Activated CD4-positive, alpha-beta memory T cell treated with anti-CD3 and anti-CD28 coated beads for 36 hours (primary cell): ENCODE measurements at regions of chr19 and their contacts with region 1.

Region 1: DNA sequence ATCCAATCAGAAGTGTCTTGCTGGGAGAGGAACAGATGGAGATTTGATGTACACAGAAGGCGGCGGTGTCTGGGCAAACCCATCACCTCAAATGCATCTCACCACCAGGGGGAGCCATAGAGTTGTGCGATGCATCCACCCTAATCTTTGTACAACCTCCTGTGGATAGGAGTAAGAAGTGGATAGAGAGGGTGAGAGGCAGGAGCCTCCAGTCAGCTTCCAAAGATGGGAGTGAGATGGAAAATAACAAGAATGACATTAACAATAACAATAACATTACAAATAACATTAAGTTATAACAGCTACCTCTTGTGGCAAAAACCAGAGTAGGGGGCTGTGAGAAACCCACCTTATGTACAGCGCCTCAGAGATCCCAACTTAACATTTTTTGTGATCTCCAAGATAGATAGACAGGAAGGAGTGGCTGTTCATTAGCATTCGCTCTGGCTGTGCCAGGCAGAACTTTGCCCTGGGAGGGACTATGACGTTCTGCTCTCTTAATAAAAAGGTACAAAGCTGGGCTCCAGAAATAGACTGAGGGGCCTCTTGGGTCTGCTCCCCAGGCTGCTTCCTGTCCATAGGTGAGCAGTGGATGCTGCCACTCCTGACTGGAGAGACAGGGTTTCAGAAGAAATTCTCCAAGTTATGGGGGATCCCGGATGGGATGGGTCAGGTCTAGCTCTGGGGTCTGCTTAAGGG is 5.2 kb upstream of the CEACAM18 start:
- DNase-seq: peak; percentile 89
- H3K4me3 Mint-ChIP-seq: no peak overlapping the region
- H3K27ac Mint-ChIP-seq: no peak overlapping the region
- H3K4me1 Mint-ChIP-seq: peaks cover 16% of the 10 kb centered on the region
- H3K27me3 Mint-ChIP-seq: peaks cover 7% of the 10 kb centered on the region

Region 2: GRCh38 chr19:51272183-51272810 is 200.9 kb before region 1 on chr19:
- CTCF ChIA-PET with region 1: no interaction called
- POLR2A ChIA-PET with region 1: no interaction called
- intact Hi-C with region 1: no loop called
- DNase-seq: peak; percentile 57
- H3K4me3 Mint-ChIP-seq: no peak overlapping the region
- H3K27ac Mint-ChIP-seq: peak overlapping the region; percentile 71
- H3K4me1 Mint-ChIP-seq: peaks cover 22% of the 10 kb centered on the region
- H3K27me3 Mint-ChIP-seq: no peaks in the 10 kb centered on the region

Region 3: GRCh38 chr19:51422053-51422448 is 51.1 kb before region 1 on chr19:
- CTCF ChIA-PET with region 1: interaction called, 23 read pairs
- POLR2A ChIA-PET with region 1: no interaction called
- intact Hi-C with region 1: no loop called
- DNase-seq: peak; percentile 91
- H3K4me3 Mint-ChIP-seq: no peak overlapping the region
- H3K27ac Mint-ChIP-seq: no peak overlapping the region
- H3K4me1 Mint-ChIP-seq: peaks cover 18% of the 10 kb centered on the region
- H3K27me3 Mint-ChIP-seq: peaks cover 18% of the 10 kb centered on the region

Region 4: DNA sequence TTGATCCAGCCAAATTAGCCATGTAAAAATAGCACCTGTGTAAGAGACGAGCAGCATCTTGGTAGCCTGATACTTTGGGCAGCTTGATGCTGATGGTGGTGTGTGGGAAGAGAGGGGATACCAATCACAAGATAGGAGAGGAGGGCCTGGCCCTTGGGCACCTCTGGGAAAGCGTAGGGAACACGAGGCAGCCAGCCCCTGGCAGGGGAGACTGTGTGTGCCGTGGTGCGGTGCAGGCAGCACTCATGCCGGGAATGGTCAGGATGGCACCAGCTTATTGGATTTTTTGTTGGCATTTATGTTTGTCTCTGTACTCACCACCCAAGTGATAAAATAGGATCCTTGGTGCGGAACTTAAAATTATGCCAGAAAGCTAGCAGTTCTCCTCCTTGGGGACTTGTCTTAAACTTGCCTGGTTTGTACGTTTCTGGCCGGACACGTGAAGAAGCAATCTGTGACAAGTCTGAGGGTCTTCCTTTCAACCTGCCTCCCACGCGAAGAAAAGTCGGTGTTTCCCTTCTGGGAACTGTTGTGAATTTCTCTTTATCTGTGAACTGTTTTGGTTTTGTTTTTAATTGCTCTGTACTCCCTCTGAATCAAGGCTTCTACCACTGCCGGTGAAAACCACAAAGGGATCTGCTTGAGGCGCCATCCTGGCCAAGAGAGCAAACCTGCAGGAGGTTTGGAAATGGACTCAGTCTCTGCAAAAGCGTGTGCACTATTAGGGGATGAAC is 25.0 kb before region 1 on chr19:
- CTCF ChIA-PET with region 1: interaction called, 15 read pairs
- POLR2A ChIA-PET with region 1: no interaction called
- intact Hi-C with region 1: loop called (anchors 2 kb)
- DNase-seq: peak; percentile 80
- H3K4me3 Mint-ChIP-seq: peak overlapping the region; percentile 51
- H3K27ac Mint-ChIP-seq: peak overlapping the region; percentile 93
- H3K4me1 Mint-ChIP-seq: peaks cover 51% of the 10 kb centered on the region
- H3K27me3 Mint-ChIP-seq: no peaks in the 10 kb centered on the region

Region 5: GRCh38 chr19:51507640-51508058 is 34.5 kb after region 1 on chr19:
- CTCF ChIA-PET with region 1: interaction called, 150 read pairs
- POLR2A ChIA-PET with region 1: no interaction called
- intact Hi-C with region 1: no loop called
- DNase-seq: no peak
- H3K4me3 Mint-ChIP-seq: no peak overlapping the region
- H3K27ac Mint-ChIP-seq: no peak overlapping the region
- H3K4me1 Mint-ChIP-seq: peaks cover 8% of the 10 kb centered on the region
- H3K27me3 Mint-ChIP-seq: peaks cover 11% of the 10 kb centered on the region

Region 6: GRCh38 chr19:51531349-51532315 is 58.5 kb after region 1 on chr19 and contains the start of gene SIGLEC6:
- CTCF ChIA-PET with region 1: interaction called, 10 read pairs
- POLR2A ChIA-PET with region 1: no interaction called
- intact Hi-C with region 1: no loop called
- DNase-seq: peak; percentile 13
- H3K4me3 Mint-ChIP-seq: no peak within 1 kb of the TSS
- H3K27ac Mint-ChIP-seq: no peak within 1 kb of the TSS
- H3K4me1 Mint-ChIP-seq: no peaks in the 10 kb centered on the region
- H3K27me3 Mint-ChIP-seq: peaks cover 58% of the 10 kb centered on the region
- total RNA-seq, gene SIGLEC6: not detected

Region 7: GRCh38 chr19:51637362-51637978 is 164.3 kb after region 1 on chr19:
- CTCF ChIA-PET with region 1: interaction called, 17 read pairs
- POLR2A ChIA-PET with region 1: no interaction called
- intact Hi-C with region 1: loop called (anchors 1 kb)
- DNase-seq: no peak
- H3K4me3 Mint-ChIP-seq: no peak overlapping the region
- H3K27ac Mint-ChIP-seq: no peak overlapping the region
- H3K4me1 Mint-ChIP-seq: no peaks in the 10 kb centered on the region
- H3K27me3 Mint-ChIP-seq: peaks cover 29% of the 10 kb centered on the region

Region 8: GRCh38 chr19:51784922-51785690 is 311.9 kb after region 1 on chr19:
- CTCF ChIA-PET with region 1: no interaction called
- POLR2A ChIA-PET with region 1: no interaction called
- intact Hi-C with region 1: loop called (anchors 2 kb)
- DNase-seq: peak; percentile 81
- H3K4me3 Mint-ChIP-seq: no peak overlapping the region
- H3K27ac Mint-ChIP-seq: no peak overlapping the region
- H3K4me1 Mint-ChIP-seq: no peaks in the 10 kb centered on the region
- H3K27me3 Mint-ChIP-seq: peaks cover 6% of the 10 kb centered on the region

Region 9: DNA sequence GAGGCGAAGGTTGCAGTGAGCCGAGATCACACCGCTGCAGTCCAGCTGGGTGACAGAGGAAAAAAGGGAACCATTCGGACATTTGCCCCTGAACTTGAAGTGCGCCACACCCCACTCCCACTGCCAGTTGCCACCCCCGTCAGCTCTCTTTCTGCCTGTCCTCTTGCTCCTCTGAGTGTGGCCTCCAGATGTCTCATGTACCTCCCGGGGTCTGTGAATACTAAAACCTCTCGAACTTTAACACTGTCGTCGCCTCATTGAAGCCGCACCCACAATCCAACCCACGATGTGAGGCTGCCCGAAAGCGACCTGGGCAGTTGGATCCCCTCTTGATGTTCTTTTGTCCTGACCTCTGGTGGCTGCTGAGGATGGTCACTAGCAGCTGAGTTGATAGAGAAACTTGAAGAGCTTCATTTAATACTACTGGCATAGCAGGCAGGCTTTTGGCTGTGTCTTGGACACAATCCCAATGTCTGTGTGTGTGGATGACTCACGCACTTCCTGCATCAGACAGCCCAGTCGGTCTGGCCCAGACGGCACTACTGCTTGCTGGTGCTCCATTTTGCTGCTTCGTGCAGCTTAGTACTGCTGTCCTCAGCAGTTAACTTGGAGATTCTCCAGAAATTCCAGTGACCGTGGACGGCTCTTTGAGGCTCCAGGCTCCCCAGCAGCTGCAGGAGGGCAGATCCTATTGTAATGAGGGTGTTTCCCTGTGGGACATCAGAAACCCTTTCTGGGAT is 326.0 kb after region 1 on chr19:
- CTCF ChIA-PET with region 1: no interaction called
- POLR2A ChIA-PET with region 1: no interaction called
- intact Hi-C with region 1: no loop called
- DNase-seq: no peak
- H3K4me3 Mint-ChIP-seq: no peak overlapping the region
- H3K27ac Mint-ChIP-seq: no peak overlapping the region
- H3K4me1 Mint-ChIP-seq: no peaks in the 10 kb centered on the region
- H3K27me3 Mint-ChIP-seq: peaks cover 3% of the 10 kb centered on the region